A673 (cell line): ENCODE measurements at regions of chr15 and their contacts with region 1.

Region 1: GRCh38 chr15:77295446-77295845 is 124.5 kb downstream of the PEAK1 start:
- DNase-seq: no peak
- H3K4me3 ChIP-seq: no peak overlapping the region
- H3K27ac ChIP-seq: no peak overlapping the region
- H3K4me1 ChIP-seq: no peaks in the 10 kb centered on the region
- H3K27me3 ChIP-seq: no peaks in the 10 kb centered on the region
- CTCF ChIP-seq: no peak

Region 2: GRCh38 chr15:75809986-75810750 is 1485.3 kb before region 1 on chr15:
- CTCF ChIA-PET with region 1: interaction called, 10 read pairs
- POLR2A ChIA-PET with region 1: no interaction called
- intact Hi-C with region 1: no loop called
- DNase-seq: no peak
- H3K4me3 ChIP-seq: no peak overlapping the region
- H3K27ac ChIP-seq: no peak overlapping the region
- H3K4me1 ChIP-seq: no peaks in the 10 kb centered on the region
- H3K27me3 ChIP-seq: no peaks in the 10 kb centered on the region
- CTCF ChIP-seq: peak; percentile 28; the same call in 1 of the 2 replicates

Region 3: GRCh38 chr15:76829939-76830338 is 465.5 kb before region 1 on chr15:
- CTCF ChIA-PET with region 1: no interaction called
- POLR2A ChIA-PET with region 1: no interaction called
- intact Hi-C with region 1: no loop called
- DNase-seq: no peak
- H3K4me3 ChIP-seq: no peak overlapping the region
- H3K27ac ChIP-seq: no peak overlapping the region
- H3K4me1 ChIP-seq: no peaks in the 10 kb centered on the region
- H3K27me3 ChIP-seq: no peaks in the 10 kb centered on the region
- CTCF ChIP-seq: no peak

Region 4: DNA sequence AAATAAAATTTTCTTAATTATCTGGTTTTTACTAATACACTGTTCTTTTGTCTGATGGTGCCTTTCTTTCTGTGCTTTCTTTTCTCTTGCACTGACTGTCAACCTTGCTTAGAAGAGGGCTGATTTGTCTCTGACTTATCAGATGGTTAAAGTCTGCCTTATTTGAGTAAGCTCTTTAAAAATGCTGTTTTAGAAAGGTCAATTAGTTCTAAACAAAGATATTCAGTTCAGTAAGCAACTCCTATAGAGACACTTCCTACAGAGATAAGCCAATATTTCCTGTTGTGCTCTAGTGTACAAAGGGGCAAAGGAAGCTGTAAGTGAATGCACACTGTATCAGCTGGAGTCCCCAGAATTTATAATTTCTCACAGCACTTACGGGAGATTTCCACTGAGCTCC is 71.1 kb before region 1 on chr15:
- CTCF ChIA-PET with region 1: no interaction called
- POLR2A ChIA-PET with region 1: no interaction called
- intact Hi-C with region 1: no loop called
- DNase-seq: peak; percentile 96
- H3K4me3 ChIP-seq: peak overlapping the region; percentile 8
- H3K27ac ChIP-seq: peak overlapping the region; percentile 54
- H3K4me1 ChIP-seq: peaks cover 54% of the 10 kb centered on the region
- H3K27me3 ChIP-seq: no peaks in the 10 kb centered on the region
- CTCF ChIP-seq: no peak

Region 5: GRCh38 chr15:77901974-77902750 is 606.7 kb after region 1 on chr15:
- CTCF ChIA-PET with region 1: interaction called, 11 read pairs
- POLR2A ChIA-PET with region 1: no interaction called
- intact Hi-C with region 1: no loop called
- DNase-seq: no peak
- H3K4me3 ChIP-seq: no peak overlapping the region
- H3K27ac ChIP-seq: no peak overlapping the region
- H3K4me1 ChIP-seq: no peaks in the 10 kb centered on the region
- H3K27me3 ChIP-seq: no peaks in the 10 kb centered on the region
- CTCF ChIP-seq: no peak

Region 6: DNA sequence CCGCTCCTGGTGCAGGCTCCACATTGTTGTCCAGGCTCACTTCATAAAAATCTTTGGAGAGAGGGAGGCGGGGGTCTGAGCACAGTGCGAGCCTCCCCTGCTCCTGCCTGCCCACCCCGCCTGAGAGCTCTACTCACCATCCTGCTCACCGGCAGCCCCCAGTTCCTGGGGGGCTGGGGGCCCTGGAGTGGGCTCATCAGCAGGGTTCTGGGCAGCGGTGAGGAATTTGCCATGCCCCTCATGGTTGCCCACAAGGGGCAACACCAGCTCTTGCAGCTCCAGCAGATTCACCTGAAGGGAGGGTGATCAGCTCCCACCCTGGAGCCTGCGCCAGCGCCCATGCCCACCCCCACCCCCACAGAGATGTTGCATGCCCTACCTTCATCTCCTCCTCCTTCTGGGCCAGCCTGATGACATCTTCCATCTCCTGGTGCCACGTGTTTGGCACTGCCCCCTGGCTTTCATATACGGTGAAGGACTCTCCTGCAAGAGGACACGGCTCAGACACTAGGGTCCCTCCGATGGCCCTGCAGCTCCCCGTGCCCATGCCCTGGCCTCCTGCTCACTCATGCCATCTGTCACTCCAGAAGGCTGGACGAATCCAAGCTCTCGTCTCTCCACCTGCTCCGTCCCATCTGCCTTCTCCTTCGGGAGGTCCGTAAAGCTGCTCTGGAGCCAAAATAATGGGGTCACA is 620.0 kb after region 1 on chr15:
- CTCF ChIA-PET with region 1: no interaction called
- POLR2A ChIA-PET with region 1: no interaction called
- intact Hi-C with region 1: no loop called
- DNase-seq: no peak
- H3K4me3 ChIP-seq: no peak overlapping the region
- H3K27ac ChIP-seq: no peak overlapping the region
- H3K4me1 ChIP-seq: no peaks in the 10 kb centered on the region
- H3K27me3 ChIP-seq: no peaks in the 10 kb centered on the region
- CTCF ChIP-seq: no peak